ENCODE measurements at regions of chr18 and their contacts with region 1.

Region 1: GRCh38 chr18:4004183-4004829 is 450.8 kb downstream of the DLGAP1 start:
- DNase-seq: peak; percentile 67
- H3K4me3 ChIP-seq: no peak overlapping the region
- H3K27ac ChIP-seq: peak overlapping the region; percentile 4
- H3K4me1 ChIP-seq: peaks cover 11% of the 10 kb centered on the region
- H3K27me3 ChIP-seq: no peaks in the 10 kb centered on the region
- CTCF ChIP-seq: no peak

Region 2: GRCh38 chr18:4468511-4468910 is 464.2 kb after region 1 on chr18:
- CTCF ChIA-PET with region 1: no interaction called
- dilution Hi-C with region 1: no loop called
- in situ Hi-C with region 1: no loop called
- intact Hi-C with region 1: no loop called
- DNase-seq: no peak
- H3K4me3 ChIP-seq: no peak overlapping the region
- H3K27ac ChIP-seq: no peak overlapping the region
- H3K4me1 ChIP-seq: no peaks in the 10 kb centered on the region
- H3K27me3 ChIP-seq: no peaks in the 10 kb centered on the region
- CTCF ChIP-seq: no peak

Region 3: GRCh38 chr18:5057386-5058348 is 1053.4 kb after region 1 on chr18:
- CTCF ChIA-PET with region 1: no interaction called
- dilution Hi-C with region 1: no loop called
- in situ Hi-C with region 1: no loop called
- intact Hi-C with region 1: loop called (anchors 5 kb)
- DNase-seq: peak; percentile 15
- H3K4me3 ChIP-seq: no peak overlapping the region
- H3K27ac ChIP-seq: no peak overlapping the region
- H3K4me1 ChIP-seq: no peaks in the 10 kb centered on the region
- H3K27me3 ChIP-seq: no peaks in the 10 kb centered on the region
- CTCF ChIP-seq: peak; percentile 46 to 69

Measured in mammary epithelial cell (primary cell).